ENCODE measurements at regions of chr16 and their contacts with region 1.

Region 1: GRCh38 chr16:59611556-59611955 is 877.4 kb upstream of the GOT2 start:
- DNase-seq: no peak
- ATAC-seq: no peak
- H3K4me3 ChIP-seq: no peak overlapping the region
- H3K4me3 Mint-ChIP-seq: no peak overlapping the region
- H3K27ac ChIP-seq: no peak overlapping the region
- H3K27ac Mint-ChIP-seq: no peak overlapping the region
- H3K4me1 ChIP-seq: no peaks in the 10 kb centered on the region
- H3K4me1 Mint-ChIP-seq: no peaks in the 10 kb centered on the region
- H3K27me3 ChIP-seq: no peaks in the 10 kb centered on the region
- H3K27me3 Mint-ChIP-seq: no peaks in the 10 kb centered on the region
- CTCF ChIP-seq: no peak

Region 2: DNA sequence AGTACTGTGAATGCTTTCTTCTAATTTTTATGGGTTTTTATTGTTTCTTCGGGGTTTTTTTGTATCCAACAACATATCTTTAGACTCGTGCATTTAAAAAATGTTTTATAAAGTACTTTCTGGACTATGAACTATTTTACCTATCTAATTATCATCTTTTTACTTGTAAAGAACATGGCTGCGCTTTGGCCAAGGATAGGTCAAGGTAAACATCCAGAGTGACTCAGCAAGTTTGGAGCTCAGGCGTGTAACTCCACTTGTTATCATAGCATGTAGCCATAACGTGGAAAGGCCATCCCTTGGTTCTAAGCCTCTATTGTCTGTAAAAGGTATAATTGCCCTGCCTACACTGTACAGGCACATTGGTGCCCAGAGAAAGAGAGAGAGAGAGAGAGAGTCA is 59.4 kb before region 1 on chr16:
- CTCF ChIA-PET with region 1: no interaction called
- POLR2A ChIA-PET with region 1: no interaction called
- intact Hi-C with region 1: no loop called
- DNase-seq: no peak
- ATAC-seq: no peak
- H3K4me3 ChIP-seq: no peak overlapping the region
- H3K4me3 Mint-ChIP-seq: no peak overlapping the region
- H3K27ac ChIP-seq: no peak overlapping the region
- H3K27ac Mint-ChIP-seq: no peak overlapping the region
- H3K4me1 ChIP-seq: no peaks in the 10 kb centered on the region
- H3K4me1 Mint-ChIP-seq: no peaks in the 10 kb centered on the region
- H3K27me3 ChIP-seq: no peaks in the 10 kb centered on the region
- H3K27me3 Mint-ChIP-seq: peaks cover 3% of the 10 kb centered on the region
- CTCF ChIP-seq: no peak

Region 3: DNA sequence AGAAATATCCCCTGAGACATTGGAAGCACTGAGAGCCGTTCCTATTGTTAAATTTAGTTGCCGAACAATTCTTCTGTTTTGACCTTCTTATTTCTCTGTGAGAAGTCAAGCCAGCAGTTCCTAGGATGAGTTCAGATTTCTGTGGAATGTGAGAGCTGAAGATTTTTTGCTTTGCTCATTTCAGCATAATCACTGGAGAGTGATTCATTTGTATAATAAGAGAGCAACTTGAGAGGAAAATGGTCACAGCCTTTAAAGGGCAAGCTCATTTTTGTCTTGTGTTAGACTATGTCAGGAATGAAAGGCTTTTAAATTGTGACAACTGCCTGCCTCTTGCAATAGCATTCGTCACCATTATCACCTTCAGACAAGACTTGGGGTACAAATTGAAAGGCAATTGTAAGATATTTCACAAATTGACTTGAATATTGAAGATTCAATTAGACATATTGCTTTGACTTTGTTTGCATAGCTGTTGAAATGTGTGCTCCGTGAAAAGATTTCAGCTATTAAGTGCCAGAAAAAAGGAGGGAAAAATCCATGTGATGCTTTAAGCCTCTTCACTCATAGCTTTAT is 22.5 kb after region 1 on chr16:
- CTCF ChIA-PET with region 1: no interaction called
- POLR2A ChIA-PET with region 1: no interaction called
- intact Hi-C with region 1: loop called in 1 of 2 experiments (anchors 1 kb)
- DNase-seq: no peak
- ATAC-seq: no peak
- H3K4me3 ChIP-seq: no peak overlapping the region
- H3K4me3 Mint-ChIP-seq: no peak overlapping the region
- H3K27ac ChIP-seq: no peak overlapping the region
- H3K27ac Mint-ChIP-seq: no peak overlapping the region
- H3K4me1 ChIP-seq: no peaks in the 10 kb centered on the region
- H3K4me1 Mint-ChIP-seq: no peaks in the 10 kb centered on the region
- H3K27me3 ChIP-seq: no peaks in the 10 kb centered on the region
- H3K27me3 Mint-ChIP-seq: no peaks in the 10 kb centered on the region
- CTCF ChIP-seq: no peak

Measured in CD8-positive, alpha-beta T cell (primary cell).